Activated CD8-positive, alpha-beta memory T cell treated with anti-CD3 and anti-CD28 coated beads, Interleukin-2, amount 10 ng/mL, durations not matched to agents 7 days and 5 days (primary cell): ENCODE measurements at regions of chr5 and their contacts with region 1.

Region 1: GRCh38 chr5:113606298-113607134 is 93.0 kb downstream of the YTHDC2 start:
- DNase-seq: peak; percentile 56
- ATAC-seq: peak; percentile 83
- H3K4me3 Mint-ChIP-seq: no peak overlapping the region
- H3K27ac Mint-ChIP-seq: no peak overlapping the region
- H3K4me1 Mint-ChIP-seq: peaks cover 14% of the 10 kb centered on the region
- H3K27me3 Mint-ChIP-seq: peaks cover 36% of the 10 kb centered on the region

Region 2: GRCh38 chr5:113330533-113331208 is 275.8 kb before region 1 on chr5:
- CTCF ChIA-PET with region 1: interaction called, 26 read pairs
- DNase-seq: no peak
- ATAC-seq: peak; percentile 79
- H3K4me3 Mint-ChIP-seq: no peak overlapping the region
- H3K27ac Mint-ChIP-seq: peak overlapping the region; percentile 19
- H3K4me1 Mint-ChIP-seq: peaks cover 18% of the 10 kb centered on the region
- H3K27me3 Mint-ChIP-seq: peaks cover 4% of the 10 kb centered on the region

Region 3: DNA sequence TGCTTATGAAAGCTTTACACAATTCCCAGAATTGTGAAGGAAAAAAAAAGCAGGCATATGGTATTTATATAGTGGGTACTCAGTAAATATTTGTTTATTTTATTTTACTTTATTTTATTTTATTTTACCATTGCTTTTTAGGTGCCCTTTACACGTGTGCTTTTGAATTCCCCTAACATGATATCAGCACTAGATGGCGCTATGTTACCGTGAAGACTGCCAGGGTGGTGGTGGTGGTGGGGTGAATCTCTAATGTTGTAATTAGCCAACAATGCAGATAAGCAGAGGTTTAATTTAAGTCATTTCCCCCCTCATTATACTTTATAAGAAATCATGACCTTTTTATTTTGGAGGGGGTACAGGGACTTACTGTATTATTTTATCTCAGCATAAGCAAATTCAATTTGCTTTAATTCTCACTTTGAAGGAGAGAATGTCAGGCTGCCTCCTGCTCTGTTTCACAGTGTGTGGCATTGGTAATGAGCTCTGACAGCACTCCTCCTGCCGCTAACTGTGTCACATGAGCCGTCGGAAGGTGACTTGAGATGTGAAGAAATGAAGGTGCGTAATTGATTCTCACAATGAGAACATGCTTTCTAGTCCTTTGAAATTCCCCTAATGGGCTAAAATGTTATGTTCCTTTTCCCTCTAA is 72.5 kb after region 1 on chr5:
- CTCF ChIA-PET with region 1: no interaction called
- DNase-seq: peak; percentile 42
- ATAC-seq: no peak
- H3K4me3 Mint-ChIP-seq: no peak overlapping the region
- H3K27ac Mint-ChIP-seq: no peak overlapping the region
- H3K4me1 Mint-ChIP-seq: no peaks in the 10 kb centered on the region
- H3K27me3 Mint-ChIP-seq: peaks cover 5% of the 10 kb centered on the region